B cell (primary cell): ENCODE measurements at regions of chr17 and their contacts with region 1.

Region 1: GRCh38 chr17:38719289-38719942 is 10.7 kb upstream of the CISD3 start:
- DNase-seq: no peak
- ATAC-seq: no peak
- H3K4me3 ChIP-seq: no peak overlapping the region
- H3K4me3 Mint-ChIP-seq: no peak overlapping the region
- H3K27ac ChIP-seq: no peak overlapping the region
- H3K27ac Mint-ChIP-seq: no peak overlapping the region
- H3K4me1 ChIP-seq: peaks cover 0 to 5% of the 10 kb centered on the region in 2 donors
- H3K4me1 Mint-ChIP-seq: peaks cover 14% of the 10 kb centered on the region
- H3K27me3 ChIP-seq: no peaks in the 10 kb centered on the region
- H3K27me3 Mint-ChIP-seq: no peaks in the 10 kb centered on the region
- CTCF ChIP-seq: no peak

Region 2: DNA sequence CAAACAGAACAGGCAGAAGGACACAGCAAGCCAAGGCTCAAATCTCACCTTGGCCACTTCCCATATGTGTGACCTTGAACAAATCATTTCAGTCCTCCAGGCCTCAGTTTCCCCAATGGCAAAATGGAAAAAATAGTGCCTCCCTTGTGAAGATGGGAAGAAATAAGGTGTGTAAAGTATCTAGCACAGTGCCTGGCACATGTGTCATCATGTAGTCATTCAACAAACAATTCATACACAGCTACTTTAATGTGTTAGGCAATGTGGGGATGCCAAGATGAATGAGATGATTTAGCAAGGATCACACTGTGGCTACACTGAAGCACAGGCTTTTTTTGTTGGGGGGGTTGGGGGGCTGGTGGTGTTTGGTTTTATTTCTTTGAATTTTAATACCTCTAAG is 126.9 kb before region 1 on chr17:
- CTCF ChIA-PET with region 1: no interaction called
- POLR2A ChIA-PET with region 1: interaction called, 17 read pairs
- intact Hi-C with region 1: no loop called
- DNase-seq: no peak
- ATAC-seq: no peak
- H3K4me3 ChIP-seq: no peak overlapping the region
- H3K4me3 Mint-ChIP-seq: no peak overlapping the region
- H3K27ac ChIP-seq: no peak overlapping the region
- H3K27ac Mint-ChIP-seq: no peak overlapping the region
- H3K4me1 ChIP-seq: peaks cover 14 to 22% of the 10 kb centered on the region in 2 donors
- H3K4me1 Mint-ChIP-seq: peaks cover 16% of the 10 kb centered on the region
- H3K27me3 ChIP-seq: peaks cover 0 to 94% (median 20%) of the 10 kb centered on the region in 4 experiments
- H3K27me3 Mint-ChIP-seq: peaks cover 83% of the 10 kb centered on the region
- CTCF ChIP-seq: no peak

Region 3: DNA sequence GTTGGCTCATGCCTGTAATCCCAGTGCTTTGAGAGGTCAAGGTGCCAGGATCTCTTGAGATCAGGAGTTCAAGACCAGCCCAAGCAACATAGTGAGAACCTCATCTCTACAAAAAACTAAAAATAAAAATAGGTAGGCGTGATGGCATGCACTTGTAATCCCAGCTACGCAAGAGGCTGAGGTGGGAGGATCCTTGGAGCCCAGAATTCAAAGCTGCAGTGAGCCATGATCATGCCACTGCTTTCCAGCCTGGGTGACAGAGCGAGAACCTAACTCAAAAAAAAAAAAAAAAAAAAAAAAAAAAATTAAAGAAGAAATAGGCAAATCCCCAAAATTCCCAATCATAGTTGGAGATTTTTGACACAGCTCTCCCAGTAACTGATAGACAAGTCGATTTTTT is 81.5 kb before region 1 on chr17:
- CTCF ChIA-PET with region 1: no interaction called
- POLR2A ChIA-PET with region 1: no interaction called
- intact Hi-C with region 1: no loop called
- DNase-seq: no peak
- ATAC-seq: no peak
- H3K4me3 ChIP-seq: no peak overlapping the region
- H3K4me3 Mint-ChIP-seq: no peak overlapping the region
- H3K27ac ChIP-seq: no peak overlapping the region
- H3K27ac Mint-ChIP-seq: no peak overlapping the region
- H3K4me1 ChIP-seq: no peaks in the 10 kb centered on the region
- H3K4me1 Mint-ChIP-seq: no peaks in the 10 kb centered on the region
- H3K27me3 ChIP-seq: peaks cover 0 to 7% (median 2%) of the 10 kb centered on the region in 4 experiments
- H3K27me3 Mint-ChIP-seq: peaks cover 36% of the 10 kb centered on the region
- CTCF ChIP-seq: no peak

Region 4: GRCh38 chr17:38761612-38762011 is 42.2 kb after region 1 on chr17:
- CTCF ChIA-PET with region 1: no interaction called
- POLR2A ChIA-PET with region 1: no interaction called
- intact Hi-C with region 1: no loop called
- DNase-seq: peak; percentile 36
- ATAC-seq: no peak
- H3K4me3 ChIP-seq: no peak overlapping the region
- H3K4me3 Mint-ChIP-seq: no peak overlapping the region
- H3K27ac ChIP-seq: no peak overlapping the region
- H3K27ac Mint-ChIP-seq: no peak overlapping the region
- H3K4me1 ChIP-seq: no peaks in the 10 kb centered on the region
- H3K4me1 Mint-ChIP-seq: peaks cover 4% of the 10 kb centered on the region
- H3K27me3 ChIP-seq: no peaks in the 10 kb centered on the region
- H3K27me3 Mint-ChIP-seq: no peaks in the 10 kb centered on the region
- CTCF ChIP-seq: no peak

Region 5: DNA sequence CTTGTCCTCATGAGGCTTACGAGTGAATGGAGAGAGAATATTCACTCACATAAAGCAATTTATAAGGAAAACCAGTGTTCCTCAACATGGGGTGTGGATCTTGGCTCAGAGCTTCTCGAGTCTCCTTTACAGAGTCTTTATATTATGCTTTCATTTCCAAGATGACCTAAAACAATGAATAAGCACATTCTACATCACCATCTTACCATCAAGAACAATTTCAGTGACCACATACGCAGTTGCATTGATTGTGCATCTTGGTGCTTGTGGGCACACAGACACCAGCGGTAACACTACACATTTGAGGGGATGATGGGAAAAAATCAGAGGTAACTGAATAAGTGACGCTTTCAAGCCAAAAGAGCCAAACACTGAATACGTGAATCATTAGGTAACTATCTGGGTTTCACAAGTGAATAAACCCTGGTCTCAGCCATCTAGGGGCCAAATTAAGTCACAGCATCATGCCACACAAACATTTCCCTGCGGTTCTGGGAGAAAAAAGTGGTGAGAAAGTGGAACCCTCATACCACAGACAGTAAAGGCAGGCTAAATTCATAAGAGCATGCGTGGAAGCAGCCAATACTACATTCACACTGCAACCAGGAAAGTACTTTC is 96.3 kb after region 1 on chr17:
- CTCF ChIA-PET with region 1: no interaction called
- POLR2A ChIA-PET with region 1: no interaction called
- intact Hi-C with region 1: no loop called
- DNase-seq: no peak
- ATAC-seq: no peak
- H3K4me3 ChIP-seq: no peak overlapping the region
- H3K4me3 Mint-ChIP-seq: no peak overlapping the region
- H3K27ac ChIP-seq: no peak overlapping the region
- H3K27ac Mint-ChIP-seq: no peak overlapping the region
- H3K4me1 ChIP-seq: no peaks in the 10 kb centered on the region
- H3K4me1 Mint-ChIP-seq: peaks cover 3% of the 10 kb centered on the region
- H3K27me3 ChIP-seq: no peaks in the 10 kb centered on the region
- H3K27me3 Mint-ChIP-seq: no peaks in the 10 kb centered on the region
- CTCF ChIP-seq: peak; percentile 25